ENCODE measurements at regions of chr3 and their contacts with region 1.

Region 1: GRCh38 chr3:168574455-168575158 is 478.9 kb upstream of the GOLIM4 start:
- DNase-seq: no peak
- H3K4me3 ChIP-seq: no peak overlapping the region
- H3K27ac ChIP-seq: no peak overlapping the region
- H3K4me1 ChIP-seq: no peaks in the 10 kb centered on the region
- H3K27me3 ChIP-seq: no peaks in the 10 kb centered on the region
- CTCF ChIP-seq: no peak
- EP300 ChIP-seq: no peak
- POLR2A ChIP-seq: no peak

Region 2: GRCh38 chr3:168497741-168498140 is 76.9 kb before region 1 on chr3:
- in situ Hi-C with region 1: no loop called
- intact Hi-C with region 1: loop called (anchors 2 kb)
- DNase-seq: no peak
- H3K4me3 ChIP-seq: no peak overlapping the region
- H3K27ac ChIP-seq: no peak overlapping the region
- H3K4me1 ChIP-seq: no peaks in the 10 kb centered on the region
- H3K27me3 ChIP-seq: no peaks in the 10 kb centered on the region
- CTCF ChIP-seq: no peak
- EP300 ChIP-seq: no peak
- POLR2A ChIP-seq: no peak

Region 3: DNA sequence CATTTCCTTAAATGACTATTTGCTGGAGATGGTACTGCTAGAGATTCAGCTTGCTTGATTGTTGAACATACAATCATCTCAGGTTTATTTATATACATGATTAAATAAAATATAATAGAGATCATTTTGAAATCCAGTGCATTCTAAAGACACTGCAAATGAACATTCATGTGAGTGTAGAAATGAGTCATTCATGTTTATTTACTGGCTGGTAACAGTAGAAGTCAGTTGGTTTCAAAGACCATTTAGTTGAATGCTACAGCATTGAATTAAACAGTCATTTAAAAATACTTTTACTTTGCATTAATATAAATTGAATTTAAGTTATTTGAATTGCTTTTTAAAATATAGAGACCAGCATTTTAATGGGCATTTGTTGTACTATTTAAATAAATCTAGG is 73.0 kb after region 1 on chr3:
- in situ Hi-C with region 1: no loop called
- intact Hi-C with region 1: loop called (anchors 2 kb)
- DNase-seq: no peak
- H3K4me3 ChIP-seq: no peak overlapping the region
- H3K27ac ChIP-seq: no peak overlapping the region
- H3K4me1 ChIP-seq: no peaks in the 10 kb centered on the region
- H3K27me3 ChIP-seq: no peaks in the 10 kb centered on the region
- CTCF ChIP-seq: no peak
- EP300 ChIP-seq: no peak
- POLR2A ChIP-seq: no peak

Measured in transverse colon (tissue), 4 donors.